ENCODE measurements at regions of chr7 and their contacts with region 1.

Region 1: DNA sequence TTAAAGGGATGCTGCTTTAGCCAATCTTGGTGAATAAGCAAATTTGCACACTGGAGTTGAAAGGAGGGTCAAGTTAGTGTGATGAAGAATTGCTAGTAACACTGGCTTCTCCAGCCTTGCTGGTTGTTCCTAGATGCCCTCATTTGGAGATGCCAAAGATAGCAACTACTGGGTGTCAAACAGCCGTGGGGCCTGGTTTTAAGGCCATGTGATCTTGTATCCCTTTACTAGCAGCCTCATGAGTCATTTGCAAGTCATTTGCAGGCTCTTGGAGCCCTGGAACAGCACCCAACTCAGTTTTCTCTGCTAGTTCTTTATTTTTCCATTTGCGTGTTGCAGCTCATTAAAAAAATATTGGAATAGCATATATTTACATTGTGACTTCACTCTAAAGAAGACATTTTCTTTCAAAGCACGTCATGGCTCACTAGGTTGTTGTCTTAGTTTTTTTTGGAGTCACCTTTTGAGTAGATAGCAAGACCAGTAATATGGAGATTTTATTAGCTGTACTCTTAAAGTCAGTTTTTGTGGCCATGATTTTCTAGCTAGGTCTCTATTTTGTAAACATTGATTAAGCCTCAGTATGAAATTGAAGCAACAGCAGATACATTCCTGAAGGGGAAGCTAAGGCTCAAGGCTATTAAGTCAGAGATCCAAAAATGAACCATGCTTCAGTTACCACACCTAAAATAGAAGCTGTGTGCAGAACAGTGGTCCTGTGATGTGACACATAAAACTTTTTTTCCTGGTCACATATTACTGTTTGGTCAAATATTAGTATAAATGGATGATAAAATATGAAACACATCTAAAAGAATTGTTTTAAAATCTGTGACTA is 1.3 kb downstream of the LSMEM1 start:
- DNase-seq: peak; percentile 75
- H3K4me3 ChIP-seq: no peak overlapping the region
- H3K27me3 ChIP-seq: no peaks in the 10 kb centered on the region
- CTCF ChIP-seq: no peak

Region 2: DNA sequence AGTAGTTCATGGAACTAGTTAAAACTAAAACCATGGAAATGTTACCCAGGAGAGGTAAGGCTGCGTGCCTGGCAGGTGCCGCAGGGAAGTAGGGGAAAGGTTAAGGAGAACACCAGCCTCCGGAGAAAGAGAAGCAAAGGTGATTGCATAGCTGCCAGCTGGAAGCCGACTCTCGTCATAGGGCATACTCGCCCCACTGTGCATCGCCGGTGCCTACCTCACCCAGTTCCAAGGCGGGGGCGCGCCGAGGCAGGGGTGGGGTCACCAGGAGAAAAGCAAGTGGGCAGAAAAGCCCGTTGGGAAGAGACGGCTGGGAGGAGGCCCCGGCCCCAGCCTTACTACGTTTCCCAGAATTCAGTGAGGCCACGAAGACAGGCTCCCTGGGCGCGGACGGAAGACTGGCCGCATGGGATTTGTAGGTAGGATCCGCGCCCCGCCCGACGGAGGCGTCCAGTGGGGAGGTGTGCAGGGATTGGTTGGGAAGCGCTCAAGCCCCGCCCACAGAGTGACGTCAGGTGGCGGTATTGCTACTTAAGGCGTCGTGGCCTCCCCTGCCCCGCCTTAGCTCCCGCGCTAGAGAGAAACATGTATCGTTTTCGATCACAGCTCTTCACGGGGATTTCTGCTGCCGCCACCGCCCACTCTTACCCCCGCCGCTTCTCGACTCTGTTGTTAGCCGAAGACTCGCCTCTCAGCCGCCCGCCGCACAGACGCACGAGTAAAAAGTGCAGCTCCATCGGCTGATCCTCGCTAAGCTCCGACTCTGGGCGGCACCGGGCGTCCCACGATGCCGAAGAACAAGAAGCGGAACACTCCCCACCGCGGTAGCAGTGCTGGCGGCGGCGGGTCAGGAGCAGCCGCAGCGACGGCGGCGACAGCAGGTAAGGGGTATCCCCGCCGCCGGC is 31.9 kb before region 1 on chr7 and contains the start of gene IFRD1:
- CTCF ChIA-PET with region 1: interaction called, 12 read pairs
- POLR2A ChIA-PET with region 1: interaction called, 8 read pairs
- DNase-seq: peak; percentile 86
- H3K4me3 ChIP-seq: peak within 1 kb of the TSS; percentile 100
- H3K27me3 ChIP-seq: no peaks in the 10 kb centered on the region
- CTCF ChIP-seq: no peak
- polyA plus RNA-seq, gene IFRD1: 24.2 and 39.6 TPM in 2 replicates

Region 3: GRCh38 chr7:112462236-112462635 is 19.8 kb before region 1 on chr7:
- CTCF ChIA-PET with region 1: interaction called, 10 read pairs
- POLR2A ChIA-PET with region 1: no interaction called
- DNase-seq: no peak
- H3K4me3 ChIP-seq: no peak overlapping the region
- H3K27me3 ChIP-seq: no peaks in the 10 kb centered on the region
- CTCF ChIP-seq: no peak

Region 4: DNA sequence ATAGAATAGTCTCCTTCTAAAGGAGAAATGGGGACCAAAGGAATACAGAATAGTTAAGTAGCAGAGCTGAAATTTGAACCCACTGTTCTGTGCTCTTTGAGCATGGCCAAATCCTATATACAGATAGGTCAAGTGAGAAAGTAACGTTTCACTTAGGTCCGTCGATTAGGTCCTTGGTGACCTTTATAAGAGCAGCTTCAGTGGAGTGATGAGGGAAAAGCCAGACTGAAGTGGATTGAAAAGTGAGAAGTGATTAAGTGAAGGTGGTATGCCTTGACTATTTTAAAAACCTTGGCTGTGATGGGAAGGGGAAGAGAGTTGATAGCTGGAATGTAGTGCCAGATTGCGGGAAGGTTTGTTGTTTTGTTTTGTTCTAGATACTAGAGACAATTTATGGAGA is 11.9 kb before region 1 on chr7:
- CTCF ChIA-PET with region 1: interaction called, 12 read pairs
- POLR2A ChIA-PET with region 1: no interaction called
- DNase-seq: no peak
- H3K4me3 ChIP-seq: no peak overlapping the region
- H3K27me3 ChIP-seq: no peaks in the 10 kb centered on the region
- CTCF ChIP-seq: no peak

Region 5: DNA sequence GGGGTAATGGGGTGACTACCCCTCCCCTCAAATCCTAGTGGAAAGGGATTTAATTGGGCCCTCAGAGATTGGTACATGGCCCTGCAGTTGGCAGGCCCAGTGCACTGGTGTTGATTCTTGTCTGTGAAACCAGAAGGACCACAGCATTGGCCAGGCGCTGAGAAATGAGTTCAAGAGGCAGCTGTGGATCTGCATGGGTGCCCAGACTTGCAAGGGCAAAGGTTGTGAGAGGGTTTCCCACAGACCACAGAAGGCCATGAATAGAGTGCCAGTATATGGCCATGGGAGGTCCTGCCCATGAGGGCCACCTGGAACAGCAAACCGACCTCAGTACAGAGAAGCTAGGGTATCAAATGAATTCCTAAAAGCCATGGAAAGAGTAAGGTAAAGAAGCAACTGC is 275.3 kb after region 1 on chr7:
- CTCF ChIA-PET with region 1: no interaction called
- POLR2A ChIA-PET with region 1: no interaction called
- DNase-seq: no peak
- H3K4me3 ChIP-seq: no peak overlapping the region
- H3K27me3 ChIP-seq: no peaks in the 10 kb centered on the region
- CTCF ChIP-seq: no peak

Measured in BJ (cell line).